HEK293 (cell line): ENCODE measurements at regions of chr17 and their contacts with region 1.

Region 1: GRCh38 chr17:59311130-59311920 is 20.1 kb upstream of the YPEL2 start:
- H3K4me3 ChIP-seq: no peak overlapping the region
- H3K27ac ChIP-seq: no peak overlapping the region
- H3K4me1 ChIP-seq: no peaks in the 10 kb centered on the region
- CTCF ChIP-seq: peak; percentile 88

Region 2: GRCh38 chr17:59124665-59125064 is 186.7 kb before region 1 on chr17:
- CTCF ChIA-PET with region 1: no interaction called
- POLR2A ChIA-PET with region 1: no interaction called
- H3K4me3 ChIP-seq: no peak overlapping the region
- H3K27ac ChIP-seq: no peak overlapping the region
- H3K4me1 ChIP-seq: no peaks in the 10 kb centered on the region
- CTCF ChIP-seq: no peak

Region 3: GRCh38 chr17:59178266-59178978 is 132.9 kb before region 1 on chr17:
- CTCF ChIA-PET with region 1: no interaction called
- POLR2A ChIA-PET with region 1: no interaction called
- H3K4me3 ChIP-seq: no peak overlapping the region
- H3K27ac ChIP-seq: no peak overlapping the region
- H3K4me1 ChIP-seq: no peaks in the 10 kb centered on the region
- CTCF ChIP-seq: no peak

Region 4: DNA sequence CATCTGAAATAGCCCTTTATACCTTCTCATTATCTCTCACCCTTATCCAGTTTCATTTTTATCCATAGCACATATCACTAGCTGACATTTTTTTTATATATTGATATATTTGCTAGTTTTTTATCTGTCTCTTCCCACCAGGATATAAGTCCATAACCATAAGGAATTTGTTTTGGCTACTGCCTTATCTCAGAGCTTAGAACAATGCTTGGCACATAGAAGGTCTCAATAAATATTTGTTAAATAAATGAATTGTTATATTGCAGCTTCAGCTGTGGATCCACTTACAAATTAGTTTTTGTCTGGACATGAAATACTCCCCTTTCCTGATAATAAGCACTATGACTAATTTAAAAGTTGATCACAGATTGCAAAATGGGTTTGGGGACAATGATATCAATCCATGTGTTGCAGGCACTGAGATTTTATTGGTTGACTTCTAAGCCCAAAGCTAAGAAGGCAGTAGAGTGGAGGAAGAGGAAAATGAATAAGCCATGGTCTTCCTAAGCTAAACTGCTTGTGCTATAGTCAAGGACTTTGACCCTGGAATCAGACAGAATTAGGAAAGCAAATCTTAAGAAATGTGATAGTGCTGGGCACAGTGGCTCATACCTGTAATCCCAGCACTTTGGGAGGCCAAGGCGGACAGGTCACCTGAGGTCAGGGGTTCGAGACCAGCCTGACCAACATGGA is 11.8 kb before region 1 on chr17:
- CTCF ChIA-PET with region 1: interaction called, 10 read pairs
- POLR2A ChIA-PET with region 1: no interaction called
- H3K4me3 ChIP-seq: no peak overlapping the region
- H3K27ac ChIP-seq: no peak overlapping the region
- H3K4me1 ChIP-seq: no peaks in the 10 kb centered on the region
- CTCF ChIP-seq: no peak

Region 5: DNA sequence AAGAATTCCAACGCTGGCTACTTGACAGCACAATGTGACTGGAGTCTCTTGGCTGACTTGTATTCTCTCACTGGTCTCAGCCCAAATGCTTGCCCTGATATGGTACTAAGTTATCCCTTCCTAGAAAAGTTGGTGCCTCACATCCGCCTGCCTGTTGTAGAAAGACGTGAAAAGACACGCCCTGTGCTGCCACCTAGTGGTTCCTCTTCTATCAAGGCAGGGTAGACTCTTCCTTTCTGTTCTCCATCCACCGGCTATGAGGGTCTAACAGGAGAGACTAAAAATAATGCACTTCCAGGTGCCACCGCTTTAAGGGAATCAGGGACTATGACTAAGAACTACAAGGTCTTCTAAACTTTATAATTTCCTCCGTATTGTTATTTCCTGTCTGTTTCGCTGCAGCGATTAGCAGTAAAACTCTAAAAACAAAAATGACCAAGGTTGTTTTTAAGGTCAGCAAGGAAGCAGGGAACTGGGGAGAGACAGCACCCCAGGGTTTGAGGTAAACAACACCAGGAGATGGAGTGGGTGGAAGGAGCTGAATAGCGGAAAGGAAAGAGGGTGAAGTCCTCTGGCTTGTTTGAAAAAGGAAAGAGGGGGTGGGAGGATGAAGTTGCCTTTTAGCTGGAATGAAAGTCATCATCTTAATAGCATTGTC is 129.6 kb after region 1 on chr17:
- CTCF ChIA-PET with region 1: interaction called, 290 read pairs
- POLR2A ChIA-PET with region 1: interaction called, 4 read pairs
- H3K4me3 ChIP-seq: no peak overlapping the region
- H3K27ac ChIP-seq: no peak overlapping the region
- H3K4me1 ChIP-seq: peaks cover 5% of the 10 kb centered on the region; the same call in 1 of the 2 replicates
- CTCF ChIP-seq: peak; percentile 69

Region 6: GRCh38 chr17:59521204-59522126 is 210.1 kb after region 1 on chr17:
- CTCF ChIA-PET with region 1: interaction called, 12 read pairs
- POLR2A ChIA-PET with region 1: no interaction called
- H3K4me3 ChIP-seq: no peak overlapping the region
- H3K27ac ChIP-seq: no peak overlapping the region
- H3K4me1 ChIP-seq: no peaks in the 10 kb centered on the region
- CTCF ChIP-seq: peak; percentile 74

Region 7: DNA sequence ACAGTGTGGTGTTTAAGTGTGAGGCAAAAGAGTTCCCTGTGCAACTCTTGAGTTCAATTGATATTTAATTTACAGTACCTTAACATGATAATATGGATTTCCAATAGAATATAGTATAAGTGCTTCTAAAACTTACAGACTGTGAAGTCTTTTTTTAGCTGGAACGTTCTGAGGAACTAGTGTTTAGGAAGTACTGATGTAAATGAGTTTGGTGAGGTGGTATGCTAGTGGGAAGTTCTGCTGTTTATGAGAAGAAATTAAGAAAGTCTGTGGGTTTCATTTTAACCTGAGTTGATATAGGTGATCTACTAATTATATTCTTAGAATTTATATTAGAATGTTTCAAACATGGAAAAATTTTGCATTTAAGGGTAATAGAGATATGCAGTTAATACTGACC is 363.9 kb after region 1 on chr17:
- CTCF ChIA-PET with region 1: interaction called, 12 read pairs
- POLR2A ChIA-PET with region 1: no interaction called
- H3K4me3 ChIP-seq: no peak overlapping the region
- H3K27ac ChIP-seq: no peak overlapping the region
- H3K4me1 ChIP-seq: no peaks in the 10 kb centered on the region
- CTCF ChIP-seq: no peak